Vagina (tissue), 2 donors: ENCODE measurements at regions of chr10 and their contacts with region 1.

Region 1: GRCh38 chr10:91493313-91493712 is 83.2 kb downstream of the HECTD2 start:
- DNase-seq: no peak
- H3K4me3 ChIP-seq: no peak overlapping the region
- H3K27ac ChIP-seq: no peak overlapping the region
- H3K4me1 ChIP-seq: no peaks in the 10 kb centered on the region
- H3K27me3 ChIP-seq: no peaks in the 10 kb centered on the region
- CTCF ChIP-seq: peak; percentile 36 to 64 (median 39)
- POLR2A ChIP-seq: no peak

Region 2: DNA sequence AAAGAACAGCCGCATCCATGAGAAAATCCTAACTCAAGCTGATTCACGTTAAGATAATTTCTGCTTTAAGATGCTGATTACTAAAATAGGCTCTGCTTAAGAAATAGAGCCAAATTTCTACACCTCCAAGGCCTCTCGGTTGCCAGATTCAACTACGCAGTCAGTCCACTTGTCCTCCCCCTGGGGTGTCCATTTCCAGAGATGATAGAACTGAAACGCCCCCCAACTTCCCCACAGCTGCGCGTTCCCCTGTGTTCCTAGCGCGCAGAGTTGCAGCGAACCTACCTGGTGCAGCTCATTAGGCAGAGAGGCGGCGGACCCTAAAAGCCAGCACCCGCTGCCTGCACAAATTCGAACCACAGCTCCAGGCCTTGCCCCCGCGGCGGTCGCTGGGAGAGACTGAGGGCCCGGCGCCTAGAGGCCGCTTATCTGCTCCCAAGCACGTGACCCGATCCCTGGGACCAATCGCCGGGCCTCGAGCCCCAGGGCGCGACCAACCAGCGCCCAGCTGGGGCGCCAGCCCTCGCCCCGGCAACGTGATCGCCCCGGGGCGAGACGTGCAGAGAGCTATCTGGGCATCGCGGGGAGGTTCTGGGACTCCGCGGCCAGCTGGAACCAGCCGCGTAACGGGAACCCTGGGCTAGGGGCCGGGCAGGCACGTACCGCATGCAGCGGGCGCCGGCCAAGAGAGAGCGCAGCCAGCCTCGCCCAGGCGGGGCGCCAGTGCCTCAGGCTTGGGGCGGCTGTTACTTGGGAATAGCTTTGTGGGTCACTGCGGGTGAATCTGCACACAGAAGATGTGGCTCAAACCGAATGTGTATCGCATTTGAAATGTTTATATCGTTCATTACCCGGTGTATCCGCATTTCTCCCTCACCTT is 139.6 kb after region 1 on chr10 and contains the start of gene PPP1R3C:
- intact Hi-C with region 1: loop called (anchors 10 kb)
- DNase-seq: no peak
- H3K4me3 ChIP-seq: peak within 1 kb of the TSS; percentile 65 to 66
- H3K27ac ChIP-seq: peak within 1 kb of the TSS; percentile 85
- H3K4me1 ChIP-seq: peaks cover 28% of the 10 kb centered on the region
- H3K27me3 ChIP-seq: no peaks in the 10 kb centered on the region
- CTCF ChIP-seq: peak in 2 of 3 experiments; percentile 7 to 20
- POLR2A ChIP-seq: peak in 1 of 2 donors; percentile 63
- total RNA-seq, gene PPP1R3C: 26.3 TPM